ENCODE measurements at regions of chr1 and their contacts with region 1.

Region 1: DNA sequence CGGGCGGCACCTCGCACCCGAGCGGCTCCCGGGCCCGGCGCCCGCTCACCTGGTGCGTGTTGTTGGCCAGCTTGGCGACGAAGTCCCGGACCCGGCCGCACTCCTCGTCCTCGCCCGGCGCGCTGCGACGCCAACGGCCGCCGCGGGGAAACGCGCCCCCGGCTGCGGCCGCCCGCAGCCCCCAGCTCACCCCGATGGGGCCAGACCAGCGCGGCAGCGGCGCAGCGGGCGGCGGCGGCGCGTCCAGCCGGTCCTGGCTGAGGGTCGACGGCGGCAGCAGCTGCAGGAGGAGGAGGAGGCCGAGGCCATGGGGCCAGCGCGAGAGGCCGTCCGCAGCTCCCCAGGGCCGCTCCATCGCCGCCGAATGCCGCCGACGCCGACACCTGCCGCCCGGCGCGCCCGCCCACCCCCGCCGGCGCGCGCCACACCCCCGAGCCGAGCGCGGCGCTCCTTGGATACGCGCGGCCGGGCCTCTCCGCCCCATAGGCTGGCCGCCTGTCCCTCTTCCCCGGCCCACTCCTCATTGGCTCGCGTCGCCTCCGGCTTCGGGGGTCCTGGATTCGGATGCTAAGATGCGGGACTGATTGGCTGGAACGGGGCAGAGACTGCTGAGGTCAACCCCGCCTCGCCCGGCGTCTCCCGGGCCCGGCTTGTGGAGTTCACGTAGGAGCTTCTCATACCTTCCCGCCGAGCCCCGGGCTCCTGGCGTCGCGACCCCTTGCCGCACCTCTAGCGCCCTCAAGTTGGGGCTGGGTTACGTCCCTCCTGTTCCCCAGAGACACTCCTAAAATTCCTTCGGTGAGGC is at the start of gene SORT1:
- DNase-seq: peak; percentile 85 to 91
- ATAC-seq: peak; percentile 67 to 77 (median 72)
- H3K4me3 ChIP-seq: peak within 1 kb of the TSS; percentile 72
- H3K27ac ChIP-seq: peak within 1 kb of the TSS; percentile 97
- H3K4me1 ChIP-seq: peaks cover 48% of the 10 kb centered on the region
- H3K27me3 ChIP-seq: no peaks in the 10 kb centered on the region
- CTCF ChIP-seq: no peak
- total RNA-seq, gene SORT1: 123 to 363 (median 207) TPM

Region 2: GRCh38 chr1:109099938-109100773 is 297.6 kb before region 1 on chr1:
- intact Hi-C with region 1: loop called in 1 of 2 experiments (anchors 5 kb)
- DNase-seq: peak; percentile 96 to 99
- ATAC-seq: peak; percentile 98
- H3K4me3 ChIP-seq: peak overlapping the region; percentile 75
- H3K27ac ChIP-seq: peak overlapping the region; percentile 97
- H3K4me1 ChIP-seq: peaks cover 21% of the 10 kb centered on the region
- H3K27me3 ChIP-seq: no peaks in the 10 kb centered on the region
- CTCF ChIP-seq: peak; percentile 82

Region 3: GRCh38 chr1:109263597-109264398 is 133.9 kb before region 1 on chr1:
- intact Hi-C with region 1: loop called (anchors 5 kb)
- DNase-seq: peak; percentile 84 to 90
- ATAC-seq: peak; percentile 85 to 94 (median 91)
- H3K4me3 ChIP-seq: no peak overlapping the region
- H3K27ac ChIP-seq: no peak overlapping the region
- H3K4me1 ChIP-seq: no peaks in the 10 kb centered on the region
- H3K27me3 ChIP-seq: no peaks in the 10 kb centered on the region
- CTCF ChIP-seq: peak; percentile 91

Region 4: DNA sequence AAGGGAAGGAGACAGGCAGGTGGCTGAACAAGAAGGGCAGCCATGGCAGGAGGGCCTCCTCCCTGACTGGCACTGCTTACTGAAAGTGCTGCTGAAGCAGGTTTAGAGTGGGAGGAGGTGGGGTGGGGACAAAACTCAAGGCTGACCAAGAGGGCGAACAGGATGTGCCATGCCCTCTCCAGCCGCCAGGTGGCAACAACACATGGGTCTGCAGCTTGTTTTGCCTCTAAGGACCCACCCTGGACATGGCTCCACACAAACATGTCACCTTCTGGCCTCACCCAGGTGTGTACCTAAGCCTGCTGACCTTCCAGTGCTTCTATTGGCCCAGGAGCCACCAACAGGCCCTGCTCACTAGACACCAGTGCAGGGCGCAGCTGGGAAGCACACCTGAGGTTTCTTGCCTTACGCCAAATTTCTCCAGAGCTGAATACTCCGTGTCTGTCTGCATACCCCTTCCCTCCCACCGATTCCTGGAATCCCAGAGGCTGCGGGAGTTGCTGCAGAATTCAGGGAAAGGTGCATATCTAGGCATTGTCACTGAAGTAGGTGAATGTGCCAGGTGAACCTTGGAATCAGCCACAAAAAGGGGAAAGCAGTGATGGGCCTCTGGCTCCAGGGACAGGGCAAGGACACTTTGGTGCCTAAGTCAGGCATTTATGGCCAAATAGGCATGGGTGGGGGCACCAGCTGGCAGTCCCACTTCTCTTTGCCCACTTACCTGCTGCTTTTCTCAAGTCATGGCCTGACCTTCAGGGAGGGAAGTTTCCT is 120.1 kb before region 1 on chr1:
- intact Hi-C with region 1: loop called (anchors 1 to 2 kb)
- DNase-seq: peak; percentile 77 to 85
- ATAC-seq: peak; percentile 65 to 85 (median 78)
- H3K4me3 ChIP-seq: no peak overlapping the region
- H3K27ac ChIP-seq: no peak overlapping the region
- H3K4me1 ChIP-seq: no peaks in the 10 kb centered on the region
- H3K27me3 ChIP-seq: no peaks in the 10 kb centered on the region
- CTCF ChIP-seq: peak; percentile 87

Region 5: GRCh38 chr1:109282952-109283747 is 114.6 kb before region 1 on chr1 and contains the start of gene PSRC1:
- intact Hi-C with region 1: loop called in 1 of 2 experiments (anchors 1 kb)
- DNase-seq: peak; percentile 95 to 98
- ATAC-seq: peak; percentile 99
- H3K4me3 ChIP-seq: peak within 1 kb of the TSS; percentile 67
- H3K27ac ChIP-seq: peak within 1 kb of the TSS; percentile 83
- H3K4me1 ChIP-seq: peaks cover 7% of the 10 kb centered on the region
- H3K27me3 ChIP-seq: no peaks in the 10 kb centered on the region
- CTCF ChIP-seq: peak; percentile 65
- total RNA-seq, gene PSRC1: 0.54 to 1.7 (median 0.57) TPM

Region 6: DNA sequence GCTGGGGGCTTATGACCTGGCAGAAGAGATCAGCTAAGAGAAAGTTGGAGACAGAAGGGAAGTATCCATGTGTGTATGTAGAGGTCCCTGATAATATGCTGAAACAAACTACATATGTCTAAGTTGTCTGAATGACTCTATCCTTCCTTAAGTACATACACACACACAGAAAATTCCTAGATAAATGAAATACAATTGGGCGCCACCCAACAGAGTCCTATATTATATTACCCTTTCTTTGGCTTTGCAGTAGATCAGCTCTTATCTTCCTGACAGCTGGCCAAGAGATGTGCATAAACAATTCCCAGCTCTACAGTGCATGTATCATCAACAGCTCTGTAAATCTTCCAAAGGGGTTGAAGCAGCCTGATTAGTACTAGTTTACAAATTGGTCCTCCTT is 40.1 kb before region 1 on chr1:
- intact Hi-C with region 1: loop called (anchors 5 kb)
- DNase-seq: no peak
- ATAC-seq: no peak
- H3K4me3 ChIP-seq: no peak overlapping the region
- H3K27ac ChIP-seq: no peak overlapping the region
- H3K4me1 ChIP-seq: peaks cover 17% of the 10 kb centered on the region
- H3K27me3 ChIP-seq: no peaks in the 10 kb centered on the region
- CTCF ChIP-seq: no peak

Region 7: GRCh38 chr1:109370712-109371455 is 26.9 kb before region 1 on chr1:
- intact Hi-C with region 1: loop called in 1 of 2 experiments (anchors 2 kb)
- DNase-seq: no peak
- ATAC-seq: peak; percentile 83 to 91 (median 86)
- H3K4me3 ChIP-seq: peak overlapping the region; percentile 57
- H3K27ac ChIP-seq: peak overlapping the region; percentile 97
- H3K4me1 ChIP-seq: peaks cover 46% of the 10 kb centered on the region
- H3K27me3 ChIP-seq: no peaks in the 10 kb centered on the region
- CTCF ChIP-seq: no peak

Region 8: DNA sequence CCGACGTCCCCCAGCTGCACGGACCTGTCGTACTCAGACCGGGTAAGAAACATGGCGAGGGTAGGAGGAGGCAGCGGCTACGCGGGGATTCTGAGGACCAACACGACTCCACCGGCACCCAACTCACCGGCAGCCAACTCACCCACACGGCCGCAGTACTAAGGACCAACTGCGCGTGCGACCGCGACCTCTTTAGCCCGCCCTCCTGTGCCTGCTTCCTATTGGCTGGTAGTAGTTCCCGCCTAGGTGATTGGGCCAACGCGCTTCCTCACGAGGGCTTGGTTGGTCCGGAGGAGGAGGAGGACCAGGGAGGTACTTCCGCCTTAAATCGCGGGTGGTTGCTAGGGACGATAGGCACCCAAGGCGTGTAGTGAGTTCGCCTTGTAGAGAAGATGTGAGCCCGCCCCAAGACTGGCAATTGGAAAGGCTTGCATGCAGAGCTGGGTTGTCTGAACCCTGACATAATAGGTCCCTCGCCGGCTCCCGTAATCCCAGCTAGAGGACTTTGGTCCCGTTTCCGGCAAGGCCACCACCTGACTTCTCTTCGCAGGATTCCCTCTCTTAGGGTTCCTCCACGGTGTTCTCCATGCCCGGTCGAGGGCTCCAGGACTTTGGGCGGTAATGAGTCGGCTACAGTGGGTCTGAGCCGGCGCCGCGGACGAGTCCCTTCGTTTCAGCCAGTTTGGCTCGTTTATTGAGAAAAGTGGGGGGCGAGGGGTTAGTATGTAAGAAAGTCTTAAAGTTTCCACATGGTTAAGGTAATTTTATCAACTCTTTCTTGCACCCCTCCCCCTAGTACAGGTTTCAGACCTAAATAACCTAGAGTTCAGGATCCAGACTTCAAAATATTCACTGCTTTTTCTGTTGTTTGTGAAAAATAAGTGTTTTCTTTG is 28.8 kb after region 1 on chr1 and contains the start of gene PSMA5:
- intact Hi-C with region 1: no loop called
- DNase-seq: peak; percentile 96 to 99
- ATAC-seq: peak; percentile 97 to 100 (median 98)
- H3K4me3 ChIP-seq: peak within 1 kb of the TSS; percentile 84
- H3K27ac ChIP-seq: peak within 1 kb of the TSS; percentile 90
- H3K4me1 ChIP-seq: peaks cover 33% of the 10 kb centered on the region
- H3K27me3 ChIP-seq: no peaks in the 10 kb centered on the region
- CTCF ChIP-seq: no peak
- total RNA-seq, gene PSMA5: 58.1 to 123 (median 94.6) TPM